Activated naive CD4-positive, alpha-beta T cell treated with anti-CD3 and anti-CD28 coated beads for 36 hours (primary cell): ENCODE measurements at regions of chr15 and their contacts with region 1.

Region 1: GRCh38 chr15:72231066-72231846 is at the start of gene PKM:
- DNase-seq: peak; percentile 98
- H3K4me3 Mint-ChIP-seq: peak within 1 kb of the TSS; percentile 100
- H3K27ac Mint-ChIP-seq: peak within 1 kb of the TSS; percentile 99
- H3K4me1 Mint-ChIP-seq: peaks cover 25% of the 10 kb centered on the region
- H3K27me3 Mint-ChIP-seq: no peaks in the 10 kb centered on the region
- total RNA-seq, gene PKM: 1,794 to 1,797 TPM

Region 2: GRCh38 chr15:72117486-72118399 is 113.5 kb before region 1 on chr15 and contains the start of gene MYO9A:
- CTCF ChIA-PET with region 1: no interaction called
- intact Hi-C with region 1: loop called (anchors 1 kb)
- DNase-seq: peak; percentile 99
- H3K4me3 Mint-ChIP-seq: peak within 1 kb of the TSS; percentile 95
- H3K27ac Mint-ChIP-seq: peak within 1 kb of the TSS; percentile 97
- H3K4me1 Mint-ChIP-seq: peaks cover 31% of the 10 kb centered on the region
- H3K27me3 Mint-ChIP-seq: no peaks in the 10 kb centered on the region
- total RNA-seq, gene MYO9A: 9.5 to 10.0 TPM

Region 3: DNA sequence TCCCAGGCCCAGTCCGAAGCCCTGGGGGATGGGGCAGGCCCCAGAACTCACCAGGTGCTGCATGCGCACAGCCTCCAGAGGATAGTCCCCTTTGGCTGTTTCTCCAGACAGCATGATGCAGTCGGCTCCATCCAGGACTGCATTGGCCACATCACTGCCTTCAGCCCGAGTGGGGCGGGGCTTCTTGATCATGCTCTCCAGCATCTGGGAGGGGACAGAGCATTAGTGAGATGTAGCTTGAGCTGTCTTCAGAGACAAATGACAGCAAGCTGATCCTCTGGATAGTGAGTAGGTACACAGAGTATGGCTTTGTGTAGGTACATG is 24.6 kb before region 1 on chr15:
- CTCF ChIA-PET with region 1: interaction called, 22 read pairs
- intact Hi-C with region 1: loop called (anchors 1 kb)
- DNase-seq: no peak
- H3K4me3 Mint-ChIP-seq: no peak overlapping the region
- H3K27ac Mint-ChIP-seq: peak overlapping the region; percentile 69
- H3K4me1 Mint-ChIP-seq: peaks cover 47% of the 10 kb centered on the region
- H3K27me3 Mint-ChIP-seq: no peaks in the 10 kb centered on the region

Region 4: DNA sequence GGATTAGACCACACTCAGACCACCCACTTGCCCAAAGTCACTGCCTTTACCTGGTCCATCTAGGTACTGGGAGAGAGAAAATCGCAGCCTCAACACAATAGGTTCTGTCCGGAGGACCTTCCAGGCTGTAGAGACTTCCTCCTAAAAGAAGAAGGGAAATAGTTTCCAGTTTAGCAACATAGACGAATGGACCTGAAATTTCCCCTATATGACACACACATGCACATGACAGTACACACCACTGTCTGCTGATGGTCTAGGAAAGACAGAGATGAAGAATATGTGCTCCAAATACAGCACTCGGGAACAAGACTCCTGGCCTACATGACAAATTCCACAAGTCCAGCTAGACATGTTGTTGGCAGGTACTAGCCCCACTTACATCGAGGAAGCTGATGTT is 33.8 kb after region 1 on chr15:
- CTCF ChIA-PET with region 1: interaction called, 7 read pairs
- intact Hi-C with region 1: loop called (anchors 1 kb)
- DNase-seq: no peak
- H3K4me3 Mint-ChIP-seq: no peak overlapping the region
- H3K27ac Mint-ChIP-seq: no peak overlapping the region
- H3K4me1 Mint-ChIP-seq: peaks cover 45% of the 10 kb centered on the region
- H3K27me3 Mint-ChIP-seq: no peaks in the 10 kb centered on the region

Region 5: GRCh38 chr15:72375847-72376581 is 144.8 kb after region 1 on chr15 and contains the start of gene HEXA:
- CTCF ChIA-PET with region 1: interaction called, 3 read pairs
- intact Hi-C with region 1: loop called (anchors 5 kb)
- DNase-seq: peak; percentile 98
- H3K4me3 Mint-ChIP-seq: peak within 1 kb of the TSS; percentile 92
- H3K27ac Mint-ChIP-seq: peak within 1 kb of the TSS; percentile 94
- H3K4me1 Mint-ChIP-seq: peaks cover 42% of the 10 kb centered on the region
- H3K27me3 Mint-ChIP-seq: no peaks in the 10 kb centered on the region
- total RNA-seq, gene HEXA: 47.7 to 49.3 TPM

Region 6: DNA sequence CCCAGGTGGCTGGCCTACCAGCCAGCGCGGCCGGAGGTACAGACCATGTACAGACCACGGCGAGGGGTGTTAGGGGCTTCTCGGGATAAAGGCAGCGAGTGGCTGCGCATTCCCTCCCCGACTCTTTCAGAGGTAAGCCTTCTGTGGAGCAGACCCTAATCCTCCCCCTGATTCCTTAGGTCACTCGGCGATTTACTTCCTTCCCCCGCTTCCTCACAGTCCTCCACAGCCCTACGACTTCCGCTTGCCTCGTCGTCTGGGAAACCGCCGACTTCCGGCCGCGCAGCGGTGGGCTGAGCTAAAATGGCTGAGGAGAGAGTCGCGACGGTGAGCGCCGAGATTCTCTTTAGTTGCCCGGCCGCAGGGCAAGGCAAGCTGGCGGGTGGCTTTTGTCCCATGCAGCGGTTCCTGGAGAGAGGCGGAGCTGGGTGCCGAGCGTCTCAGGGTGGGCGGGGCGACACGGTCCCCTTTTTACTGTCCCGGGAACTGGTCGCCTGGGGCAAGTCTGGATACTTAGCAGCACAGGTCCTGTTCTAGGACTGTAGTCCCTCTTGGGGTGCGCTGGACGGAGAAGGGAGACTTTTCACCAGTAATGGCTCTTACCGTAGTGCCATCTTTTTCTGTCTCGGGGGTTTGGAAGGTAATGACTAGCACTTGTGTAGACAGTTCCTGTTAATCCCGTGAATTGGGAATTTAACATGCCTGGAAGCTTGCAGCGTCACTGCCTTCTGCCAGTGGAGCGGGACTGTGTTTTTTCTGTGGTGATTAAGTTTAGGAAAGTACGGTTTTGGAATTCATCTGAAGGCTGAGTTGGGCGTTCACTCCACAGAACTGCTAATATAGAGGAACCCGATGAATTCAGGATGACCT is 454.9 kb after region 1 on chr15 and contains the starts of genes BBS4 and HIGD2B:
- CTCF ChIA-PET with region 1: no interaction called
- intact Hi-C with region 1: loop called (anchors 2 kb)
- DNase-seq: peak; percentile 91
- H3K4me3 Mint-ChIP-seq: peak within 1 kb of the TSS; percentile 89
- H3K27ac Mint-ChIP-seq: peak within 1 kb of the TSS; percentile 87
- H3K4me1 Mint-ChIP-seq: peaks cover 15% of the 10 kb centered on the region
- H3K27me3 Mint-ChIP-seq: no peaks in the 10 kb centered on the region
- total RNA-seq, gene BBS4: 16.3 to 17.4 TPM
- total RNA-seq, gene HIGD2B: 0.19 to 0.27 TPM

Region 7: GRCh38 chr15:73991726-73992593 is 1760.7 kb after region 1 on chr15 and contains the start of gene STOML1:
- CTCF ChIA-PET with region 1: no interaction called
- intact Hi-C with region 1: loop called (anchors 10 kb)
- DNase-seq: peak; percentile 95
- H3K4me3 Mint-ChIP-seq: peak within 1 kb of the TSS; percentile 95
- H3K27ac Mint-ChIP-seq: peak within 1 kb of the TSS; percentile 83
- H3K4me1 Mint-ChIP-seq: peaks cover 49% of the 10 kb centered on the region
- H3K27me3 Mint-ChIP-seq: no peaks in the 10 kb centered on the region
- total RNA-seq, gene STOML1: 8.7 to 9.5 TPM